GM12878 (cell line): ENCODE measurements at regions of chr3 and their contacts with region 1.

Region 1: GRCh38 chr3:78857494-78858111 is 910.2 kb downstream of the ROBO1 start:
- DNase-seq: no peak
- ATAC-seq: peak; percentile 36; the same call in 1 of the 3 replicates
- H3K4me3 ChIP-seq: no peak overlapping the region
- H3K27ac ChIP-seq: no peak overlapping the region
- H3K4me1 ChIP-seq: no peaks in the 10 kb centered on the region
- H3K27me3 ChIP-seq: no peaks in the 10 kb centered on the region
- CTCF ChIP-seq: peak in 1 of 3 experiments; percentile 28; a peak in 2 of 6 replicates
- EP300 ChIP-seq: no peak
- POLR2A ChIP-seq: no peak
- RAD21 ChIP-seq: peak; percentile 28; the same call in 1 of the 2 replicates

Region 2: GRCh38 chr3:78823852-78824251 is 33.8 kb before region 1 on chr3:
- CTCF ChIA-PET with region 1: no interaction called
- POLR2A ChIA-PET with region 1: no interaction called
- RAD21 ChIA-PET with region 1: interaction called, 3 read pairs
- SMC1A ChIA-PET with region 1: interaction called, 10 read pairs
- in situ Hi-C with region 1: no loop called
- intact Hi-C with region 1: no loop called
- DNase-seq: no peak
- ATAC-seq: no peak
- H3K4me3 ChIP-seq: no peak overlapping the region
- H3K27ac ChIP-seq: no peak overlapping the region
- H3K4me1 ChIP-seq: no peaks in the 10 kb centered on the region
- H3K27me3 ChIP-seq: no peaks in the 10 kb centered on the region
- CTCF ChIP-seq: no peak
- EP300 ChIP-seq: no peak
- POLR2A ChIP-seq: no peak
- RAD21 ChIP-seq: no peak

Region 3: DNA sequence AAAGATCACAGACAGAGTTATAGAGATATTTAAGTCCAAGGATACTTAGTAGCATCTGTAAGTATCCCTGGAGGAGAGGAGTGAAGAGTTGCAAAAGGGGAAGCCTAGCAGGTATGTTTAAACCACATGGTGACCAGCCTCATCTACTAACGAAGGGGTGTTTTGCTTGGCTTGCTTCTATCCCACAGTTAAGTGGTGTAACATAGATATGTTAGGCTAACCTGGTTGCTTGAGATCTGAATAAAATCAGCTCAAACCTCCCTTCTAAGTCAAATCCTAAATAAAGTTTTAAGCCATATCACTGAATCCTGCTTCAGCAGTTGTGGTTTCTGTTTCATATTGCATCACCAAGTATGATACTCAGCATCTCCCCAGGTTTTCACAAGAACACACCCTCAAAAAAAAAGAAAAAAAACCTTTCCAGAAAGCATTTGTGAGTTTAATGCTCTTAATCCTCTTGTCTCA is 30.0 kb after region 1 on chr3:
- CTCF ChIA-PET with region 1: no interaction called
- POLR2A ChIA-PET with region 1: interaction called, 4 read pairs
- RAD21 ChIA-PET with region 1: interaction called, 7 read pairs
- SMC1A ChIA-PET with region 1: interaction called, 12 read pairs
- in situ Hi-C with region 1: no loop called
- intact Hi-C with region 1: no loop called
- DNase-seq: peak; percentile 34
- ATAC-seq: peak; percentile 48
- H3K4me3 ChIP-seq: no peak overlapping the region
- H3K27ac ChIP-seq: no peak overlapping the region
- H3K4me1 ChIP-seq: no peaks in the 10 kb centered on the region
- H3K27me3 ChIP-seq: no peaks in the 10 kb centered on the region
- CTCF ChIP-seq: no peak
- EP300 ChIP-seq: no peak
- POLR2A ChIP-seq: no peak
- RAD21 ChIP-seq: no peak

Region 4: GRCh38 chr3:79032686-79033318 is 175.2 kb after region 1 on chr3:
- CTCF ChIA-PET with region 1: interaction called, 7 read pairs
- POLR2A ChIA-PET with region 1: no interaction called
- RAD21 ChIA-PET with region 1: interaction called, 3 read pairs
- SMC1A ChIA-PET with region 1: interaction called, 20 read pairs
- in situ Hi-C with region 1: no loop called
- intact Hi-C with region 1: no loop called
- DNase-seq: no peak
- ATAC-seq: peak; percentile 78
- H3K4me3 ChIP-seq: no peak overlapping the region
- H3K27ac ChIP-seq: no peak overlapping the region
- H3K4me1 ChIP-seq: no peaks in the 10 kb centered on the region
- H3K27me3 ChIP-seq: no peaks in the 10 kb centered on the region
- CTCF ChIP-seq: peak; percentile 35 to 59 (median 35); a peak in 5 of 6 replicates
- EP300 ChIP-seq: no peak
- POLR2A ChIP-seq: no peak
- RAD21 ChIP-seq: peak; percentile 77

Region 5: DNA sequence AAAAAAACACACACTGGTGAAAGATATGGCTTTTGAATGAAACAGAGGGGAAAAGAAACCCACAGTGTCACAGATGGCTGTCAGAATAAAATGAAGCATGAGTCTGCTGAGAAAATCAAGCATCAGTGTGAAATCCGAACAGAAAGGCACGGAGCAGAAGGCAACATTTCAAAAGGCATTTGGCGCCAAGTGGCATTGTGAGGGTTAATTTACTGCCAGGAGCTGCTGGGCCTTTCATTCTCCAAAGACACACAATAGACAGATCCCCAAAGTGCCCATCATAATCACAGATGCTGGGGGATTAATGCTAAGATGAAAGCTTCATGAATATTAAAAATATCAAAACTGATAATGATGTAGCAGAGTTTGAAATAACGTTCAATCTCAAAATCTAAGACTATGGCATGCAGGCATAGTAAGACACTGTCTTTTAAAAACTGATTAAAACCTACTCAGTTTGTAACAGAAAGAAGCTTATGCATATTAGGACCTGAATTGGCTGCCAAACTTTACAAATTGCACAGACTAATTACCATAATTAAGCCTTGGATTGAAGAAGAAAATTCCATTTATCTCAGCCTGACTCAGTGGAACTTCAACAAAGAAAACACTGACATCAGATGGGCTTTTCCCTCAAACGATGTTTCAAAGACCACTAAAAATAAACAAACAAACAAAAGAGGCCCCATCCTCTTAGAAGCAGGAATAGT is 321.0 kb after region 1 on chr3:
- CTCF ChIA-PET with region 1: no interaction called
- POLR2A ChIA-PET with region 1: no interaction called
- RAD21 ChIA-PET with region 1: no interaction called
- SMC1A ChIA-PET with region 1: no interaction called
- in situ Hi-C with region 1: no loop called
- intact Hi-C with region 1: no loop called
- DNase-seq: no peak
- ATAC-seq: no peak
- H3K4me3 ChIP-seq: no peak overlapping the region
- H3K27ac ChIP-seq: no peak overlapping the region
- H3K4me1 ChIP-seq: no peaks in the 10 kb centered on the region
- H3K27me3 ChIP-seq: no peaks in the 10 kb centered on the region
- CTCF ChIP-seq: no peak
- EP300 ChIP-seq: no peak
- POLR2A ChIP-seq: no peak
- RAD21 ChIP-seq: no peak

Region 6: GRCh38 chr3:79253704-79254103 is 396.1 kb after region 1 on chr3:
- CTCF ChIA-PET with region 1: no interaction called
- POLR2A ChIA-PET with region 1: no interaction called
- RAD21 ChIA-PET with region 1: no interaction called
- SMC1A ChIA-PET with region 1: no interaction called
- in situ Hi-C with region 1: no loop called
- intact Hi-C with region 1: no loop called
- DNase-seq: no peak
- ATAC-seq: peak; percentile 73
- H3K4me3 ChIP-seq: no peak overlapping the region
- H3K27ac ChIP-seq: no peak overlapping the region
- H3K4me1 ChIP-seq: no peaks in the 10 kb centered on the region
- H3K27me3 ChIP-seq: no peaks in the 10 kb centered on the region
- CTCF ChIP-seq: no peak
- EP300 ChIP-seq: no peak
- POLR2A ChIP-seq: no peak
- RAD21 ChIP-seq: no peak

Region 7: DNA sequence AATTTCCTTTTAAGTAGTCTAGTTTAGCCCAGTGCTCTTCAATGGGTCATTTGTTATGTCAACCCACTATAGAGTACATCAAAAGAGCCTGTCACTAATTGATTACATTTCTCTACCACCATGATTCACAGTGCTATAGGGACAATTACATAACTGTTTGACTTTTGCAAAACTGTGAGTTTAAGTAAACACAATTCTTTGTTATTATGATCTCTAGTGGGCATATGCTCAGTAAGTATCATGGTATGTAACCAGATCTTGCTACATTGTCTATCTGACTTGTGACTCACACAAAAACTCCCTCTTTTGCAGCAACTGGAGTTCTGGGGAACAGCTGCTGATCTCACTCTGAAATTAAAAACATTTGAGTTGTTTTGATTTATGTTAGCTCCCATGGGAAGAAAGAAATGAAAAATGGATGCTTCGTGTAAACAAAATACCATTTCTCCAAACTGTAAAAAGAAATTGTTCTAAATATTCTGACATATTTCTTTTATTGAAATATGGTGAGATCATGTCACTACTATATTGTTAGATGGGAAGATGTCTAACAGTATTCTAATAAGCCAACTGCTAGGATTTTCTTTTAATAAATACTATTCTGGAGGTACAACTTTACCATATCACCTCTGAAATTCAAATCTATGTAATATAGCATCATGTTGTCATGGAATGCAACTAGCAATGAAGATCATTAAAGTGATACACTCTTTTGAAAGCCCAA is 439.8 kb after region 1 on chr3:
- CTCF ChIA-PET with region 1: no interaction called
- POLR2A ChIA-PET with region 1: no interaction called
- RAD21 ChIA-PET with region 1: no interaction called
- SMC1A ChIA-PET with region 1: no interaction called
- in situ Hi-C with region 1: no loop called
- intact Hi-C with region 1: no loop called
- DNase-seq: no peak
- ATAC-seq: peak; percentile 79
- H3K4me3 ChIP-seq: no peak overlapping the region
- H3K27ac ChIP-seq: no peak overlapping the region
- H3K4me1 ChIP-seq: no peaks in the 10 kb centered on the region
- H3K27me3 ChIP-seq: no peaks in the 10 kb centered on the region
- CTCF ChIP-seq: no peak
- EP300 ChIP-seq: no peak
- POLR2A ChIP-seq: no peak
- RAD21 ChIP-seq: no peak